Activated CD4-positive, alpha-beta memory T cell treated with anti-CD3 and anti-CD28 coated beads for 36 hours (primary cell): ENCODE measurements at regions of chr12 and their contacts with region 1.

Region 1: GRCh38 chr12:104381731-104382480 is 74.8 kb upstream of the CHST11 start:
- DNase-seq: peak; percentile 87
- H3K4me3 Mint-ChIP-seq: no peak overlapping the region
- H3K27ac Mint-ChIP-seq: no peak overlapping the region
- H3K4me1 Mint-ChIP-seq: peaks cover 15% of the 10 kb centered on the region
- H3K27me3 Mint-ChIP-seq: peaks cover 3% of the 10 kb centered on the region

Region 2: GRCh38 chr12:104243551-104243950 is 138.4 kb before region 1 on chr12:
- CTCF ChIA-PET with region 1: no interaction called
- POLR2A ChIA-PET with region 1: no interaction called
- intact Hi-C with region 1: no loop called
- DNase-seq: no peak
- H3K4me3 Mint-ChIP-seq: no peak overlapping the region
- H3K27ac Mint-ChIP-seq: no peak overlapping the region
- H3K4me1 Mint-ChIP-seq: no peaks in the 10 kb centered on the region
- H3K27me3 Mint-ChIP-seq: peaks cover 6% of the 10 kb centered on the region

Region 3: GRCh38 chr12:104334581-104334980 is 47.3 kb before region 1 on chr12:
- CTCF ChIA-PET with region 1: no interaction called
- POLR2A ChIA-PET with region 1: no interaction called
- intact Hi-C with region 1: no loop called
- DNase-seq: no peak
- H3K4me3 Mint-ChIP-seq: no peak overlapping the region
- H3K27ac Mint-ChIP-seq: no peak overlapping the region
- H3K4me1 Mint-ChIP-seq: no peaks in the 10 kb centered on the region
- H3K27me3 Mint-ChIP-seq: no peaks in the 10 kb centered on the region

Region 4: GRCh38 chr12:104494137-104494792 is 112.4 kb after region 1 on chr12:
- CTCF ChIA-PET with region 1: interaction called, 4 read pairs
- POLR2A ChIA-PET with region 1: no interaction called
- intact Hi-C with region 1: loop called (anchors 5 kb)
- DNase-seq: peak; percentile 89
- H3K4me3 Mint-ChIP-seq: peak overlapping the region; percentile 62
- H3K27ac Mint-ChIP-seq: peak overlapping the region; percentile 89
- H3K4me1 Mint-ChIP-seq: peaks cover 88% of the 10 kb centered on the region
- H3K27me3 Mint-ChIP-seq: no peaks in the 10 kb centered on the region

Region 5: GRCh38 chr12:104671407-104672098 is 289.6 kb after region 1 on chr12:
- CTCF ChIA-PET with region 1: interaction called, 10 read pairs
- POLR2A ChIA-PET with region 1: no interaction called
- intact Hi-C with region 1: no loop called
- DNase-seq: peak; percentile 94
- H3K4me3 Mint-ChIP-seq: peak overlapping the region; percentile 52
- H3K27ac Mint-ChIP-seq: peak overlapping the region; percentile 95
- H3K4me1 Mint-ChIP-seq: peaks cover 60% of the 10 kb centered on the region
- H3K27me3 Mint-ChIP-seq: no peaks in the 10 kb centered on the region

Region 6: DNA sequence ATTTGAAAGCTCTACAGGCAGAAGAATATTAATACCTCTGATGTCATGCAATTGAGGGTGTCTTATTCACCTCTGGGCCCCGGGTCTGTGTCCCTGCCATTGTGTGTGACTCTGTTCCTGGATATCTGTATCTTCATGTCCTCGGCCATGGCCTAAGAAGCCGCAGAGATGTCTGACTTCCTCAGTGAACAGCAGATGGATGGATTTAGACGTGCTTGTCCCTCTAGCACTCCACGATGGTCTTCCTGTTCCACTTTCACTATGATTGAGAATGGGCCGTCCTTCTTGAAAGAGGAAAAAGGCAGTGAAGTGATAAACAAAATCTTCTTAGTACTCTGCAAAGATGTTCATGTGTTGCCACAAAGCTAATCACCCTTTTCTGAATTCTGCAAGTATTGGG is 358.8 kb after region 1 on chr12:
- CTCF ChIA-PET with region 1: interaction called, 10 read pairs
- POLR2A ChIA-PET with region 1: no interaction called
- intact Hi-C with region 1: no loop called
- DNase-seq: peak; percentile 37
- H3K4me3 Mint-ChIP-seq: peak overlapping the region; percentile 50
- H3K27ac Mint-ChIP-seq: peak overlapping the region; percentile 70
- H3K4me1 Mint-ChIP-seq: peaks cover 70% of the 10 kb centered on the region
- H3K27me3 Mint-ChIP-seq: no peaks in the 10 kb centered on the region

Region 7: DNA sequence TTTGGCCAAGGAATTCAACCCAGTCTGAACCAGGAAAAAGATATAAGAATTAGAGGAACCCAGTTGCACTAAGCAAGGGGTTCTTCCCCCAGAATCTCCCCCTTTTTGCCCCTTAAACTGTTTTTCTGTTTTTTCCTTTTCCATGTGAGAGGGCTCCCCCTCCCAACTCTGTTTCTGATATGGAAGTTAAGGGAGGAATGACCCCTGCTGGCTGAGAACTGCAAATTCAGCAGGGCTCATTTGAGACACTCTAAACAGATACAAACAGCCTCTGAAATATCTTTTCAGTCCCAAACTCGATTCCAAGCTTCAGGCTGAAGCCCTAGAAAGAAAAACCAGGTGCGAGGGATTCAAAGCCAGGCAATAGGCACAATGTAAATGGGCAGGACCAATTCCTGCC is 443.5 kb after region 1 on chr12:
- CTCF ChIA-PET with region 1: interaction called, 14 read pairs
- POLR2A ChIA-PET with region 1: no interaction called
- intact Hi-C with region 1: loop called (anchors 5 kb)
- DNase-seq: peak; percentile 16
- H3K4me3 Mint-ChIP-seq: no peak overlapping the region
- H3K27ac Mint-ChIP-seq: no peak overlapping the region
- H3K4me1 Mint-ChIP-seq: peaks cover 5% of the 10 kb centered on the region
- H3K27me3 Mint-ChIP-seq: no peaks in the 10 kb centered on the region

Region 8: GRCh38 chr12:104877123-104877705 is 495.3 kb after region 1 on chr12:
- CTCF ChIA-PET with region 1: interaction called, 20 read pairs
- POLR2A ChIA-PET with region 1: no interaction called
- intact Hi-C with region 1: loop called (anchors 1 kb)
- DNase-seq: peak; percentile 40
- H3K4me3 Mint-ChIP-seq: no peak overlapping the region
- H3K27ac Mint-ChIP-seq: no peak overlapping the region
- H3K4me1 Mint-ChIP-seq: peaks cover 3% of the 10 kb centered on the region
- H3K27me3 Mint-ChIP-seq: no peaks in the 10 kb centered on the region